ENCODE measurements at regions of chr1 and their contacts with region 1.

Region 1: GRCh38 chr1:28437264-28437932 is 67.9 kb downstream of the PHACTR4 start:
- DNase-seq: peak; percentile 41
- ATAC-seq: peak; percentile 78
- H3K4me3 ChIP-seq: peak overlapping the region; percentile 44 to 51
- H3K27ac ChIP-seq: peak overlapping the region; percentile 90
- H3K4me1 ChIP-seq: peaks cover 37% of the 10 kb centered on the region
- H3K27me3 ChIP-seq: no peaks in the 10 kb centered on the region
- CTCF ChIP-seq: no peak

Region 2: GRCh38 chr1:28248283-28249012 is 188.9 kb before region 1 on chr1:
- CTCF ChIA-PET with region 1: no interaction called
- POLR2A ChIA-PET with region 1: interaction called, 13 read pairs
- in situ Hi-C with region 1: no loop called
- intact Hi-C with region 1: no loop called
- DNase-seq: no peak
- ATAC-seq: peak; percentile 67
- H3K4me3 ChIP-seq: peak overlapping the region; percentile 65 to 81
- H3K27ac ChIP-seq: peak overlapping the region; percentile 77
- H3K4me1 ChIP-seq: peaks cover 29% of the 10 kb centered on the region
- H3K27me3 ChIP-seq: no peaks in the 10 kb centered on the region
- CTCF ChIP-seq: peak; percentile 97

Region 3: GRCh38 chr1:28456078-28456477 is 18.7 kb after region 1 on chr1:
- CTCF ChIA-PET with region 1: no interaction called
- POLR2A ChIA-PET with region 1: no interaction called
- in situ Hi-C with region 1: no loop called
- intact Hi-C with region 1: no loop called
- DNase-seq: no peak
- ATAC-seq: peak; percentile 42; the same call in 1 of the 2 replicates
- H3K4me3 ChIP-seq: no peak overlapping the region
- H3K27ac ChIP-seq: no peak overlapping the region
- H3K4me1 ChIP-seq: no peaks in the 10 kb centered on the region
- H3K27me3 ChIP-seq: no peaks in the 10 kb centered on the region
- CTCF ChIP-seq: no peak